ENCODE measurements at regions of chr14 and their contacts with region 1.

Region 1: GRCh38 chr14:35416108-35416750 is 11.7 kb upstream of the NFKBIA start:
- DNase-seq: peak; percentile 52
- H3K4me3 Mint-ChIP-seq: peak overlapping the region; percentile 72
- H3K27ac Mint-ChIP-seq: peak overlapping the region; percentile 95
- H3K4me1 Mint-ChIP-seq: peaks cover 52% of the 10 kb centered on the region
- H3K27me3 Mint-ChIP-seq: no peaks in the 10 kb centered on the region

Region 2: GRCh38 chr14:34982417-34983147 is 433.6 kb before region 1 on chr14 and contains the start of gene SRP54:
- intact Hi-C with region 1: loop called (anchors 2 kb)
- DNase-seq: peak; percentile 100
- H3K4me3 Mint-ChIP-seq: no peak within 1 kb of the TSS
- H3K27ac Mint-ChIP-seq: no peak within 1 kb of the TSS
- H3K4me1 Mint-ChIP-seq: peaks cover 20% of the 10 kb centered on the region
- H3K27me3 Mint-ChIP-seq: no peaks in the 10 kb centered on the region
- total RNA-seq, gene SRP54: 78.9 and 82.4 TPM in 2 replicates

Region 3: DNA sequence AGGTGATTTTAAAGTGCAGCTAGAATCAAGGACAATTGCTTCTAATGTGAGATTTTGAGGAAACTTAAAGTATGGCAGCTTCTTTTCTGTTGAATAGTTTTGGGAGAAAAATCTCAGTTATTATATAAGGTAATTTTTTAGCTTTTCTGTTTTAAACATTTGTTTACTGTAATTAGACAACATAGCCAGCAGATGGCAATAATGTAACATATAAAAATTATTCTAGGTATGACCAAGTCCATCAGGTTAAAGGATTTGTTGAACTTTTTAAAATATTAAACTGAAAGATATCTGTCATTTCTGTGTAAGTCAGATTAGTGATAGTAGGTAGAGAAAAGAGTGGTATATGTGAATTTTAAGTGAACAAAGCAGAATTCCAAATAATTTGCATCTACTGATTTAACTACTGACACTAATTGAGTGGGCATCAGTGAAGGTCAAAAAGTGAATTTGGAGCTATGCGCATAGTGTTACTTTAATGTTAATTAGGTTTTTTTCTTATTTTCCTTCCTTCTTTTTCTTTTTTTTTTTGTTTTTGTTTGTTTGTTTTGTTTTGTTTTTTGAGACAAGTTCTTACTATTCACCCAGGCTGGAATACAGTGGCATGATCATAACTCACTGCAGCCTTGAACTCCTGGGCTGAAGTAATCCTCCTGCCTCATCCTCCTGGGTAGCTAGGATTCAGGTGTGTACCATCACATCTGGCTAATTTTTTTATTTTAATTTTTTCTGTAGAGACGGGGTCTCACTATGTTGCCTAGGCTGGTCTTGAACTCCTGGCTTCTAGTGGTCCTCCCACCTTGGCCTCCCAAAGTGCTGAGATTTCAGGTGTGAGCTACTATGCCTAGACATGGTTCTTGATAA is 275.3 kb before region 1 on chr14:
- intact Hi-C with region 1: loop called (anchors 1 kb)
- DNase-seq: no peak
- H3K4me3 Mint-ChIP-seq: no peak overlapping the region
- H3K27ac Mint-ChIP-seq: no peak overlapping the region
- H3K4me1 Mint-ChIP-seq: peaks cover 21% of the 10 kb centered on the region
- H3K27me3 Mint-ChIP-seq: no peaks in the 10 kb centered on the region

Region 4: DNA sequence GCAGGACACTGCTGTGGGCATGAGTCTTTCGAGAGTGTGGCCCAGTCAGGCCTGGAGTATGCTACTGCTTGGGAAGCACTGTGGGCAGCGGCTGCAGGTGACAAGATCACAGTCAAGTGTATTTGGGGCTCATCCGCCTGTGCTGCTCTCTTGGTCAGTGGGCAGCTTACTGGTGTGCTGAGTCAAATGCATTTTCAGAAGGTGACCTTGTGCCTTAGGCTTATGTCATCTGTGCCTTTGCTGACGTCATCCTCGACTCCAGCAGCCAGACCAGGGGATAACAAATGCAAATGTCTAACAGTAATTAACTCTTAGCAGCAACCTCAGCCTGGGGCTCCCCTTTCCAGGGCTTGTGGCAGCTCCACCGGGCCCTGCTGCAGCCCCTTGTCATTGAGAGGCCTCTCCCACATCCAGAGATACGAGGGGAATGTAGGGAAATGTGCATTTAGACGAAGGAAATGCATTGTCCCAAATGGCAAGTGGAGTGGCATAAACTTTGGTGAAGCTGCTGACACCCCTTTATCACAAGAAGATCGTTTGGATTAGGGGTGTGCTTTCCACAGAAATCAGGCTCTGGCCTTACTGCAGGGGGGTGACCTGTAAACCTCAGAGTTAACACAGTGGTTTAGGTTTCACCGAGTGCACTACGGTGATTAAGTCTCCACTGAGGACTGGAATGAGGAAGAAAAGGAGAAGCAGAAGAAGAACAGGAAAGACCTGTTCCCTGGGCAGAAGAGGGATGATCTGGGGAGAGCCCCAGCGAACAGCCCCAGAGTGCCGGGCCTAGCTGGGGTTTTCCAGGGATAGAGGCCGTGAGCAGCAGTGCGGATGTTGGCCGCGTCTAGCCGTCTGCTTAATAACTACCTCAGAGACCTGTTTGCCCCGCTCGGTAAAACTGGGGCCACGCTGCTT is 84.4 kb before region 1 on chr14:
- intact Hi-C with region 1: loop called (anchors 1 kb)
- DNase-seq: no peak
- H3K4me3 Mint-ChIP-seq: no peak overlapping the region
- H3K27ac Mint-ChIP-seq: peak overlapping the region; percentile 96
- H3K4me1 Mint-ChIP-seq: peaks cover 32% of the 10 kb centered on the region
- H3K27me3 Mint-ChIP-seq: no peaks in the 10 kb centered on the region

Region 5: DNA sequence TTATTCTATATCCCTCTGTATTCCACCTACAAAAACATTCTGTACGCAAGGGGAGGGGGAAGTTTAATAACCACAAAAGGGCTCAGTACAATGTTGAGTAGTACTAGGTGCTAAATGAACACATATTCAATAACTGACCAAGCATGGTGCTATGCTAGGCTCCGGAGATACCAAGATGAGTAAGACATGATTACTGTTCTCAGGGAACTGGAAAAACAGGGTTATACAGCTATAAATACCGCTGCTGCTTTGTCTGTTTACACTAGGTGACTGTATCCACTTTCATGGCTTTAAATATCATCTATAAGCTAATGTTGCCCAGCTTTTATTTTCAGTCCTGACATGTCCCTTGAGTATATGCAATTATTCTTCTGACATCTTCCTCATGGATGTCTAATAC is 253.6 kb after region 1 on chr14:
- intact Hi-C with region 1: no loop called
- DNase-seq: no peak
- H3K4me3 Mint-ChIP-seq: no peak overlapping the region
- H3K27ac Mint-ChIP-seq: no peak overlapping the region
- H3K4me1 Mint-ChIP-seq: no peaks in the 10 kb centered on the region
- H3K27me3 Mint-ChIP-seq: no peaks in the 10 kb centered on the region

Region 6: GRCh38 chr14:35687335-35687939 is 271.2 kb after region 1 on chr14:
- intact Hi-C with region 1: loop called (anchors 2 kb)
- DNase-seq: no peak
- H3K4me3 Mint-ChIP-seq: no peak overlapping the region
- H3K27ac Mint-ChIP-seq: no peak overlapping the region
- H3K4me1 Mint-ChIP-seq: peaks cover 23% of the 10 kb centered on the region
- H3K27me3 Mint-ChIP-seq: no peaks in the 10 kb centered on the region